Activated naive CD4-positive, alpha-beta T cell treated with anti-CD3 and anti-CD28 coated beads, Interleukin-2, amount 10 ng/mL, durations not matched to agents 7 days and 5 days (primary cell): ENCODE measurements at regions of chr2 and their contacts with region 1.

Region 1: GRCh38 chr2:120312861-120313694 is 32.9 kb upstream of the INHBB start:
- DNase-seq: peak; percentile 88
- H3K4me3 Mint-ChIP-seq: peak overlapping the region; percentile 64
- H3K27ac Mint-ChIP-seq: peak overlapping the region; percentile 79
- H3K4me1 Mint-ChIP-seq: peaks cover 53% of the 10 kb centered on the region
- H3K27me3 Mint-ChIP-seq: peaks cover 11% of the 10 kb centered on the region

Region 2: DNA sequence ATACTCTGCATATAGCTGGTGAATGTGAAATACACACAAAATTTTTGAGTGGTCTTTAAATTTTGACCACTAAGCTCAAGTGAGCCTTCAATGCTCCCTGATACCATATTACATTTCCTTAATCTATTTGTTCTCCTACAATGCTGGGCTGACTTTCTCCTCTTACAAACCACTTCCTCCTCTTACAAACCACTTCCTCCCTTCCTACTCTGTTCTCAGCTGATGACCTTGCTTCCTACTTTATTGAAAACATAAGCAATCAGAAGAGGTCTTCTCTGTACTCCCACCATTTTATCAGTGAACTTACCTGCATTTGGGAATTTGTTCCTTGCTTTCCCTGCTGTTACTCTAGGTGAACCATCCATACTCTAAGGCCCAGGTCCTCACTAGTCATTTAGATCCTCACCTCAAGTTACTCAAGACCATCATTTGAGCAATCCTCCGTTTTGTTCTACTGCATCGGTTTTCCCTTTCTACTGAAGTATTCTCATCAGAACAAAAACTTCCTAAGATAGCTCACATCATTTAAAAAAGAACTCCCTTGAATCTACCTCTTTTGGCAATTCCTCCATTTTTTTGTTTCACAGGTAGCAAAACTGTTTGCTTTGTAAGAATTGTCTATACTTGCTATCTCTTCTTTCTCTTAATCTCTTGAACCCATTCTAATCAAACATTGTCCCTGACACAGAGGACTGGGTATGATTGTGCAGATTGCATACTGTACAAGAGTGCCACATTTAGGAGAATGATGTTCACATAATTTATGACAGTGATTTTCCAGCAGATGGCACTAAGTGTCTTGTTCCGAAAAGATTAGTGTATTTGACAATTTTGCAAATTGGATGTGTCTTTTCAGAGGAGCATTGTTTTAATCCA is 203.7 kb before region 1 on chr2:
- CTCF ChIA-PET with region 1: interaction called, 21 read pairs
- DNase-seq: peak; percentile 24
- H3K4me3 Mint-ChIP-seq: peak overlapping the region; percentile 40
- H3K27ac Mint-ChIP-seq: peak overlapping the region; percentile 66
- H3K4me1 Mint-ChIP-seq: peaks cover 29% of the 10 kb centered on the region
- H3K27me3 Mint-ChIP-seq: no peaks in the 10 kb centered on the region

Region 3: GRCh38 chr2:120206022-120206581 is 107.0 kb before region 1 on chr2:
- CTCF ChIA-PET with region 1: interaction called, 28 read pairs
- DNase-seq: peak; percentile 55
- H3K4me3 Mint-ChIP-seq: no peak overlapping the region
- H3K27ac Mint-ChIP-seq: no peak overlapping the region
- H3K4me1 Mint-ChIP-seq: peaks cover 11% of the 10 kb centered on the region
- H3K27me3 Mint-ChIP-seq: no peaks in the 10 kb centered on the region

Region 4: GRCh38 chr2:120231974-120232635 is 81.0 kb before region 1 on chr2:
- CTCF ChIA-PET with region 1: interaction called, 68 read pairs
- DNase-seq: peak; percentile 88
- H3K4me3 Mint-ChIP-seq: peak overlapping the region; percentile 97
- H3K27ac Mint-ChIP-seq: peak overlapping the region; percentile 96
- H3K4me1 Mint-ChIP-seq: peaks cover 64% of the 10 kb centered on the region
- H3K27me3 Mint-ChIP-seq: peaks cover 5% of the 10 kb centered on the region

Region 5: GRCh38 chr2:120252225-120253021 is 60.7 kb before region 1 on chr2 and contains the start of gene RALB:
- CTCF ChIA-PET with region 1: interaction called, 11 read pairs
- DNase-seq: peak; percentile 100
- H3K4me3 Mint-ChIP-seq: peak within 1 kb of the TSS; percentile 94
- H3K27ac Mint-ChIP-seq: peak within 1 kb of the TSS; percentile 87
- H3K4me1 Mint-ChIP-seq: peaks cover 74% of the 10 kb centered on the region
- H3K27me3 Mint-ChIP-seq: peaks cover 32% of the 10 kb centered on the region

Region 6: DNA sequence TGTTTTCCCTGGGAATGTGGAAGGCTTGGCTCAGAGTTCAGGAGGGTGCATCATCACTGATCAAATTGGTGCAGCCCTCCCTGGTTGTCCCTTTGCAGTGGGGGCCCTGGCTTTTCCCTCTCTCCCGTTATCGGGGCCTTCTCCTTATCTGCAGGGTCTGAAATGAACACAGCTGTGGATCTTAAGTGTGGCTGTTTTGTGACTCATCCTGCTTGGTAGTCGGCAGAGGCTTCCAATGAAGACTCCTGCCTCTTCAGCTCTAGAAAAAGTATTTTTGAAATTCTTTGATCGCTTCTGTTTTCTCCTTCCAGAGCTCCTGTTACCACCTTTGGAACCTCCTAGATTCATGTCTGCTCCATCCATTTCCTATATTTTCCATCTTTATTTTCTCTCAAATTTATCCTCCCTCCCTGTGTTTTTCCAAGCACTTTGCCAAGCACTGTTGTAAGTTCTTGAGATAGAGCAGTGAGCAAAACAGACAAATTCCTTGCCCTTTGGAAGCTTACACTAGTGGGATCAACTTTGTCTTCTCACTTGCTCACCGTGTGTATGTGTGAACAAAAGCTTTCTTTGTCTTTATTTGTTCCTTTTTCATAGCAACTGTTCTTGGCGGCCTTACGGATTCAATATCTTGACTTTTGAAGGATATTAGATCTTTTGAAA is 14.8 kb before region 1 on chr2:
- CTCF ChIA-PET with region 1: interaction called, 29 read pairs
- DNase-seq: no peak
- H3K4me3 Mint-ChIP-seq: no peak overlapping the region
- H3K27ac Mint-ChIP-seq: no peak overlapping the region
- H3K4me1 Mint-ChIP-seq: peaks cover 31% of the 10 kb centered on the region
- H3K27me3 Mint-ChIP-seq: no peaks in the 10 kb centered on the region

Region 7: DNA sequence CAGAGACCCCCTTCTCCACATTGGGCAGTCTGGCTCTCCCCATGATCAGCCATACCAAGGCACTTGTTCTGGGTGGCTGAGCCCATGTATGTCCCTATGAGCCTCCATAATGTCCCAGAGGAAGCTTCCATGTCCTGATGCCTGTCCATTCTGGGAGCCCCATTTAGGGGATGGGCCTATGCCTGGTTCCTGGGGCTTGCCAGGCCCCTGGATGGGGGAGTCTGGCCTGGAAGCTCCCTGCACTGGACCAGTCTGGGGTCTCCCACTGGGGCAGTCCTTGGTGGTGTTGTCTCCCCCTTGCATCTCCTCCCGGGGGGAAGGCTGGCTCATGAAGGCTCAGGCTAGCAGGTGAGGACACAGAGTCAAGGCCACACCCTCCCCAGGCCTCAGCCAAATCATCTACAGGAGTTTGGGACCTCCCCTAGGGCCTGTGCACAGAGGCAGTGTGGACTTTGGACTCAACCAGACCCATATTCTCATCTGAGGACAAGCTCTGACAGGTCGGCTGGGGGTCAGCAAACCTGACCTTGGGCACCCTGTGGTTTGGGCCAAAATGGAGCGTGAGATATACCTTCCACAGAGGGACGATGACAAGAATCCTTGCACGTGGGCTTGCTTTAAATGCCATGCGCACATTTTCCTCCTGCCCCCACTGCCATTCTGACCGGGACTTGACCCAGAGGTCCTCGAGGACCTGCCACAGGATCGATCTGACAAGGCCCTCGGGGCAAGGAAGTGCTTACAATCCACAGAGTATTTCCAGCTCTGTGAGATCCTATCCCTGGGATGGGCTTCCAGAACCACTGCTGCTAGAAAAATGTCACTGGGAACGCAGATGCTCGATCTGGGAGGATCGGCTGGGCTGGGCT is 71.6 kb after region 1 on chr2:
- CTCF ChIA-PET with region 1: no interaction called
- DNase-seq: no peak
- H3K4me3 Mint-ChIP-seq: no peak overlapping the region
- H3K27ac Mint-ChIP-seq: no peak overlapping the region
- H3K4me1 Mint-ChIP-seq: no peaks in the 10 kb centered on the region
- H3K27me3 Mint-ChIP-seq: peaks cover 6% of the 10 kb centered on the region

Region 8: GRCh38 chr2:120525056-120526046 is 212.3 kb after region 1 on chr2:
- CTCF ChIA-PET with region 1: no interaction called
- DNase-seq: no peak
- H3K4me3 Mint-ChIP-seq: no peak overlapping the region
- H3K27ac Mint-ChIP-seq: no peak overlapping the region
- H3K4me1 Mint-ChIP-seq: no peaks in the 10 kb centered on the region
- H3K27me3 Mint-ChIP-seq: peaks cover 69% of the 10 kb centered on the region